HepG2 (cell line): ENCODE measurements at regions of chr7 and their contacts with region 1.

Region 1: DNA sequence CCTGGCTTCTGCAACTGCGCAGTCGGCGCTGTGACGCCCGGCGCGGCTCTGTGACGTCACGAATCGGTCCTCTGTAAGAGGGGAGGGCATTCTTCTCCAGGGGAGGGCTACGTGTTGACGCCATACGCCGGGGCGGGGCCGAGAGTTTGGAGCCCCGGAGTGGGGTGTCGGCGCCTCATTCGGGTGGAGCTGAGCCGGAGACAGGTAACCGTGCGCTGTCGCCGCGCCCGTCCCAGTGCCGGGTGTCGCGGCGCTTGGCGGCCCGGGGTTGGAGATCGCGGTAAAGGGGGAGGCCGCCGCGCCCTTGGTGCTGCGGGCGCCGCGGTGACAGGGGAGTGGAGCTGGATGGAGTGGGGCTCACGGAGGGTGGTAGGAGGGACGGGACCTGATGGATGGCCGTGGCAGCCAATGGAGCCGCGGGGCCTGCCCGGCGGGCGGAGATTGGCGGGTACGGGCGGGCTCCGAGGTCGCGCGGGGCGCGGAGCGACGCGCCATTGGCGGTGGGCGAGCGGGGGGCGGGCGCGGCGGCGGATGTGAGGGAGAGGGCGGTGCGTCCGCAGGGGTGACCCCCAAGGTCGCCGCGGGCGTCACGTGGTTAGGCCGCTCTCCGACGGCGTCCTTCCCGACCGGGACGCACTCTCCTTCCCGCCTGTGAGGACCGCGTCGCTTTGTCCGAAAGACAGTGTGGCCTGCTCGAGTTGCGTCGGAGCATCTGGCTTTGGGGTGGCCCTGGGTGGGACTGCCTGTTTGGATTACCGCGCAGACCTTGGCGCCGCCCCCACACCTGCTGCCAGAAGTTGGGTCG is at the start of gene OGDH:
- DNase-seq: peak; percentile 93
- ATAC-seq: peak; percentile 99
- H3K4me3 ChIP-seq: peak within 1 kb of the TSS; percentile 84 to 94 (median 89)
- H3K27ac ChIP-seq: peak within 1 kb of the TSS; percentile 90
- H3K4me1 ChIP-seq: peaks cover 23% of the 10 kb centered on the region
- H3K27me3 ChIP-seq: no peaks in the 10 kb centered on the region; a peak in 1 of 5 replicates
- CTCF ChIP-seq: no peak
- EP300 ChIP-seq: 0 out of 4 replicates have a peak, but pooled peaks of 1 of the 2 experiments have one; percentile 19
- POLR2A ChIP-seq: peak; percentile 80 to 90
- RAD21 ChIP-seq: peak; percentile 11; the same call in 1 of the 2 replicates
- total RNA-seq, gene OGDH: 25.4 and 28.1 TPM in 2 replicates

Region 2: GRCh38 chr7:44581879-44582603 is 24.6 kb before region 1 on chr7 and contains the start of gene TMED4:
- CTCF ChIA-PET with region 1: no interaction called
- POLR2A ChIA-PET with region 1: interaction called, 29 read pairs
- in situ Hi-C with region 1: no loop called
- intact Hi-C with region 1: no loop called
- DNase-seq: peak; percentile 96
- ATAC-seq: peak; percentile 90
- H3K4me3 ChIP-seq: peak within 1 kb of the TSS; percentile 60 to 87 (median 75)
- H3K27ac ChIP-seq: peak within 1 kb of the TSS; percentile 76
- H3K4me1 ChIP-seq: peaks cover 32% of the 10 kb centered on the region
- H3K27me3 ChIP-seq: peaks cover 0 to 11% of the 10 kb centered on the region in 2 experiments; a peak in 1 of 5 replicates
- CTCF ChIP-seq: no peak
- EP300 ChIP-seq: no peak
- POLR2A ChIP-seq: peak in 1 of 2 experiments; percentile 85; a peak in 2 of 4 replicates
- RAD21 ChIP-seq: peak; percentile 59; the same call in 1 of the 2 replicates
- total RNA-seq, gene TMED4: 39.2 and 81.4 TPM in 2 replicates

Region 3: DNA sequence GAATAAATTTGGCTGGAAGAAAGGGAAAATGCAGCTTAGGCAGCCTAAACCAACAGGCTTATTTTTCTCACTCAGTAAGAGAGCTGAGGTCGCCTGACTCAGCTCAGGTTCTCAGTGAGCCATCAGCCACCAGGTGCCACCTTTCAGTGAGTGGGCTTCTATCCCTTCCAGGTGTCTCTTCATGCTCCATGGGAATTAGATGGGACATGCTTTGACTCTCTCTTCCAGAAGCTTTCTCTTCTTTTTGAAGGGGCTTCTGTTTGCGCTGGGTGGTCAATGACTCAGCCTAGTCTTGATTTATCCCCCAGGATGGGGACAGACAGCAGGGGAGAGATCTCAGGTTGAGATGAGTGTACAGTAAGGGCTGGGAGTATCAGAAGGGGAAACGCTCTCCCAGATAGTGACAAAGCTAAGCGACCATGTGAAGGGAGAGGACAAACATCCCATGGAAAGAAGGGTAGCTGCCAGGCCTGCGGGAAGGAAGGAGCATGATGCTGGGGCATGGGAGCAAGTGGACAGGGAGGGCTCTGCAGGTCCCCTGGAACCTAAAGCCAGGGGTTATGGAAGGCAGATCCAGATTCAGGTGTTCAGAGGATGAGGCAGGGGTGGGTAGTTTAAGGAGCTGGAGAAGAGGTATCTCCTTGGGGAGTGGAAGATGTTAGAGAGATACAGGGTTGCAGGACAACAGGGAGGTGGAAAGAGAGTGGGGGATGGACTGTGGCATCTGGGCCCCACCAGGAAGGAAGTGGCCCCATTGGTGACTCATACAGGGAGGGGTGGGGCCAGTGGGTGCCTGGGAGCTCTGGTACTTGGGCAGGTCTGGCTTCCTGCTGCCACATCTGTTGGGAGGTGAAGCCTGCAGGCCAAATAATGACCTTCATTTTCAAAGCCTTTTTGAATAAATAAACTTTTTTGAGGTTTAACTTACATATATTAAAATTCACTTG is 32.2 kb after region 1 on chr7:
- CTCF ChIA-PET with region 1: no interaction called
- POLR2A ChIA-PET with region 1: interaction called, 28 read pairs
- in situ Hi-C with region 1: no loop called
- intact Hi-C with region 1: no loop called
- DNase-seq: peak; percentile 62
- ATAC-seq: peak; percentile 78
- H3K4me3 ChIP-seq: no peak overlapping the region; a peak in 1 of 6 replicates
- H3K27ac ChIP-seq: peak overlapping the region; percentile 63
- H3K4me1 ChIP-seq: peaks cover 40% of the 10 kb centered on the region
- H3K27me3 ChIP-seq: no peaks in the 10 kb centered on the region
- CTCF ChIP-seq: no peak
- EP300 ChIP-seq: peak in 1 of 2 experiments; percentile 55; a peak in 1 of 4 replicates
- POLR2A ChIP-seq: no peak
- RAD21 ChIP-seq: no peak

Region 4: GRCh38 chr7:44738051-44738723 is 131.5 kb after region 1 on chr7:
- CTCF ChIA-PET with region 1: no interaction called
- POLR2A ChIA-PET with region 1: no interaction called
- in situ Hi-C with region 1: no loop called
- intact Hi-C with region 1: no loop called
- DNase-seq: no peak
- ATAC-seq: no peak
- H3K4me3 ChIP-seq: no peak overlapping the region
- H3K27ac ChIP-seq: no peak overlapping the region
- H3K4me1 ChIP-seq: peaks cover 18% of the 10 kb centered on the region
- H3K27me3 ChIP-seq: no peaks in the 10 kb centered on the region
- CTCF ChIP-seq: no peak
- EP300 ChIP-seq: no peak
- POLR2A ChIP-seq: no peak
- RAD21 ChIP-seq: no peak

Region 5: DNA sequence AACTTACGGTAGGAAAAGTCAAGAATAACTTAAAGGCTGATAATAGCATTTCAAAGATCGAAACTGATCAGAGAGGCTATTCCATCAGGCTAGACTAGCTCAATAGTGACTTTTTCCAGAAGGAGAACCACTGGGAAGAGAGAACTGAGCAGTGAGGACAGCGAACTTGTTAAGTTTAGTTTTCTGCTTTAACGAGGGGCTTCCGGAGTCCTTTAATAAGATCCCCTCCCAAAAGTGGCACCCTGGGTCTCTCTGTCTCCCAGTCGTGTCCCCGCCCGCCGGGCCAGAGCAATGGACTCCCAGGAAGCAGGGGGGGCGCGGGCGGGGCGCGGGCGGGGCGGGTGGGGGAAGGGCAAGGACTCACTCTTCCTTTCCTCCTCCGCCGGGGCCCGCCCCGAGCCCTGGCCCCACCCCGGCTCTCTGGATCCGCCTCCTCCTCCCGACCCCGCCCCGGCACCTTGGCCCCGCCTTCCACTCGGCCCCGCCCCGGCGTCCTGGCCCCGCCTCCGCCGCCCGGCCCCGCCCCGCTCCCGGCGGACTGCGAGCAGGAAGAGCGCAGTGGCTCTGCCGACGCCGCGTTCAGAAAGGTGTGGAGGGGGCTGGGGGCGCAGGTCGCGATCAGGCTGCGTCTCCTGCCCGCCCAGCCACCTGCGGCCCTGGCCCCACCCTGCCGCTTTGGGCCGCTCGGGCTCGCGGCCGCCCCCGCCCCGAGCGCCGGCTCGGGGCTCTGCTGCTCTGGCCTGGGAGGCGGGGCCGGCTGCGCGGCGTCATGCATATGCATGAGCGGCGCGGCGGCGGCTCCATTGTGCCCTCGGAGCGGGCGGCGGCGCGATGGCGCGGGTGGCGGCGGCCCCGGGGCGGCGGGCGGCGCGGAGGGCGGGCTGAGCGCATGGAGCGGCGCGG is 141.6 kb after region 1 on chr7 and contains the start of gene ZMIZ2:
- CTCF ChIA-PET with region 1: no interaction called
- POLR2A ChIA-PET with region 1: interaction called, 8 read pairs
- in situ Hi-C with region 1: no loop called
- intact Hi-C with region 1: loop called (anchors 1 kb)
- DNase-seq: peak; percentile 64
- ATAC-seq: peak; percentile 86
- H3K4me3 ChIP-seq: peak within 1 kb of the TSS; percentile 82 to 94 (median 90)
- H3K27ac ChIP-seq: peak within 1 kb of the TSS; percentile 86
- H3K4me1 ChIP-seq: peaks cover 26% of the 10 kb centered on the region
- H3K27me3 ChIP-seq: no peaks in the 10 kb centered on the region; a peak in 1 of 5 replicates
- CTCF ChIP-seq: no peak
- EP300 ChIP-seq: peak in 1 of 2 experiments; percentile 9; a peak in 1 of 4 replicates
- POLR2A ChIP-seq: peak; percentile 37 to 57; a peak in 2 of 4 replicates
- RAD21 ChIP-seq: no peak
- total RNA-seq, gene ZMIZ2: 4.1 and 4.9 TPM in 2 replicates